ENCODE measurements at regions of chr1 and their contacts with region 1.

Region 1: DNA sequence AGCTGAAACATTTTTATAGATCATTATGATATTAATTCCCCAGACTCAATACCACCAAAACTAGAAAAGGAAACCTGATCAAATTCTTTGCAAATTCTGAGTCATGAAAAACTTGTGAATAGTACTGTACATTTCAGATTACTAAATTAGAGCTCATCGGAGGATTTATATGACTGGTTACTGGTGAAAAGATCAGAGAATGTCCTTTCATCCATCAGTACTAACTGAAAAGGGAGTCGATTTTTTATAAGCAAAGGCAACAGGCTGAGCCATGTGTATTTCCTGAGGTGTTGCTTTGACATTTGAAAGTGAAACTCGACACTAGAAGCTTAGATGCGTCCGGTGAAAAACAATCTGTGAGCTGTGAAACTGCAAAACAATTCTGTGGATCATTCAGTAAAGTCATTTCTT is 155.7 kb downstream of the TNFSF18 start:
- DNase-seq: no peak
- H3K4me3 ChIP-seq: no peak overlapping the region
- H3K27ac ChIP-seq: peak overlapping the region; percentile 18; the same call in 1 of the 2 replicates
- H3K4me1 ChIP-seq: peaks cover 45% of the 10 kb centered on the region
- H3K27me3 ChIP-seq: no peaks in the 10 kb centered on the region
- CTCF ChIP-seq: no peak

Region 2: GRCh38 chr1:172870901-172871606 is 24.0 kb before region 1 on chr1:
- CTCF ChIA-PET with region 1: no interaction called
- POLR2A ChIA-PET with region 1: no interaction called
- intact Hi-C with region 1: no loop called
- DNase-seq: peak in 1 of 2 experiments; percentile 56
- H3K4me3 ChIP-seq: no peak overlapping the region
- H3K27ac ChIP-seq: no peak overlapping the region
- H3K4me1 ChIP-seq: peaks cover 9% of the 10 kb centered on the region; the same call in 1 of the 2 replicates
- H3K27me3 ChIP-seq: no peaks in the 10 kb centered on the region
- CTCF ChIP-seq: no peak

Region 3: GRCh38 chr1:172935062-172935592 is 40.1 kb after region 1 on chr1:
- CTCF ChIA-PET with region 1: no interaction called
- POLR2A ChIA-PET with region 1: no interaction called
- intact Hi-C with region 1: loop called (anchors 2 kb)
- DNase-seq: no peak
- H3K4me3 ChIP-seq: no peak overlapping the region
- H3K27ac ChIP-seq: peak overlapping the region; percentile 85; the same call in 1 of the 2 replicates
- H3K4me1 ChIP-seq: peaks cover 34% of the 10 kb centered on the region
- H3K27me3 ChIP-seq: no peaks in the 10 kb centered on the region
- CTCF ChIP-seq: no peak

Region 4: GRCh38 chr1:172976222-172977041 is 81.4 kb after region 1 on chr1:
- CTCF ChIA-PET with region 1: no interaction called
- POLR2A ChIA-PET with region 1: no interaction called
- intact Hi-C with region 1: loop called (anchors 2 kb)
- DNase-seq: peak; percentile 24 to 61
- H3K4me3 ChIP-seq: no peak overlapping the region
- H3K27ac ChIP-seq: peak overlapping the region; percentile 34; the same call in 1 of the 2 replicates
- H3K4me1 ChIP-seq: peaks cover 36% of the 10 kb centered on the region
- H3K27me3 ChIP-seq: no peaks in the 10 kb centered on the region
- CTCF ChIP-seq: no peak

Region 5: DNA sequence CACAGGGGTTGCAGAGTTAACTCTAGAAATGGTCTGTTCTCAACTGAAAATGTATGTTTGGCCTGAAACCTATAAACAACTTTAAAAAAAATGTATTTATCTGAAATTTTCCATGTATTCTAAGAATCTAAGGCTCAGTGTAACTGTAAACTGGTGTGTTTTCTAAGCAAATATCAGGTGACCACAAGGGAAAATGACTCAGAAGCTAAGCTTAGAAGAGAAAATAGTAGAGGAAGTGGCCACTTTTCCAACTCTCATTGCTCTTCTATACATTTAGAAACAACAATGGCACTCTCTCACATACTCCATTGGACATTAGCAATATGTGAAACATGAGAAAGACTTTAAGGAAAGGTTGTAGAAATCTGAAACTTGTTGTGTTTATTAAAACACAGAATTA is 148.2 kb after region 1 on chr1:
- CTCF ChIA-PET with region 1: no interaction called
- POLR2A ChIA-PET with region 1: no interaction called
- intact Hi-C with region 1: no loop called
- DNase-seq: peak in 1 of 2 experiments; percentile 79
- H3K4me3 ChIP-seq: peak overlapping the region; percentile 34; the same call in 1 of the 2 replicates
- H3K27ac ChIP-seq: peak overlapping the region; percentile 84
- H3K4me1 ChIP-seq: peaks cover 32% of the 10 kb centered on the region
- H3K27me3 ChIP-seq: no peaks in the 10 kb centered on the region
- CTCF ChIP-seq: no peak

Region 6: GRCh38 chr1:173056380-173056779 is 161.3 kb after region 1 on chr1:
- CTCF ChIA-PET with region 1: no interaction called
- POLR2A ChIA-PET with region 1: no interaction called
- intact Hi-C with region 1: loop called (anchors 2 kb)
- DNase-seq: peak; percentile 56 to 94
- H3K4me3 ChIP-seq: no peak overlapping the region
- H3K27ac ChIP-seq: peak overlapping the region; percentile 64
- H3K4me1 ChIP-seq: peaks cover 39% of the 10 kb centered on the region
- H3K27me3 ChIP-seq: no peaks in the 10 kb centered on the region
- CTCF ChIP-seq: no peak

Region 7: GRCh38 chr1:173507205-173507846 is 612.3 kb after region 1 on chr1:
- CTCF ChIA-PET with region 1: no interaction called
- POLR2A ChIA-PET with region 1: no interaction called
- intact Hi-C with region 1: no loop called
- DNase-seq: peak; percentile 49 to 92
- H3K4me3 ChIP-seq: peak overlapping the region; percentile 25; the same call in 1 of the 2 replicates
- H3K27ac ChIP-seq: peak overlapping the region; percentile 84
- H3K4me1 ChIP-seq: peaks cover 38% of the 10 kb centered on the region
- H3K27me3 ChIP-seq: no peaks in the 10 kb centered on the region
- CTCF ChIP-seq: no peak

Region 8: DNA sequence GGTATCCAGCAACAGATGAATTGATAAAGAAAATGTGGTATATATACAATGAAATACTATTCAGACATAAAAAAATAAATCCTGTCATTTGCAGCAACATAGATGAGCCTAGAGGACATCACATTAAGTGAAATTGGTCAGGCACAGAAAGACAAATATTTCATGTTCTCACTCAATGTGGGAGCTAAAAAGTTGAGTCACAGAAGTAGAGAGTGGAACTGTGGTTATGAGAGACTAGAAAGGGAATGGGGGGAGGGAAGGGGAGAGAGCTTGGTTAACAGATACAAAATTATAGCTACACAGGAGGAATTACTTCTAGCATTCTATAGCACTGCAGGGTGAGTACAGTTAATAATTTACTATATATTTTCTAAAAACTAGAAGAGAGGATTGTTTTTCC is 1059.1 kb after region 1 on chr1:
- CTCF ChIA-PET with region 1: no interaction called
- POLR2A ChIA-PET with region 1: interaction called, 22 read pairs
- intact Hi-C with region 1: no loop called
- DNase-seq: no peak
- H3K4me3 ChIP-seq: no peak overlapping the region
- H3K27ac ChIP-seq: no peak overlapping the region
- H3K4me1 ChIP-seq: no peaks in the 10 kb centered on the region
- H3K27me3 ChIP-seq: no peaks in the 10 kb centered on the region
- CTCF ChIP-seq: no peak